ENCODE measurements at regions of chr14 and their contacts with region 1.

Region 1: DNA sequence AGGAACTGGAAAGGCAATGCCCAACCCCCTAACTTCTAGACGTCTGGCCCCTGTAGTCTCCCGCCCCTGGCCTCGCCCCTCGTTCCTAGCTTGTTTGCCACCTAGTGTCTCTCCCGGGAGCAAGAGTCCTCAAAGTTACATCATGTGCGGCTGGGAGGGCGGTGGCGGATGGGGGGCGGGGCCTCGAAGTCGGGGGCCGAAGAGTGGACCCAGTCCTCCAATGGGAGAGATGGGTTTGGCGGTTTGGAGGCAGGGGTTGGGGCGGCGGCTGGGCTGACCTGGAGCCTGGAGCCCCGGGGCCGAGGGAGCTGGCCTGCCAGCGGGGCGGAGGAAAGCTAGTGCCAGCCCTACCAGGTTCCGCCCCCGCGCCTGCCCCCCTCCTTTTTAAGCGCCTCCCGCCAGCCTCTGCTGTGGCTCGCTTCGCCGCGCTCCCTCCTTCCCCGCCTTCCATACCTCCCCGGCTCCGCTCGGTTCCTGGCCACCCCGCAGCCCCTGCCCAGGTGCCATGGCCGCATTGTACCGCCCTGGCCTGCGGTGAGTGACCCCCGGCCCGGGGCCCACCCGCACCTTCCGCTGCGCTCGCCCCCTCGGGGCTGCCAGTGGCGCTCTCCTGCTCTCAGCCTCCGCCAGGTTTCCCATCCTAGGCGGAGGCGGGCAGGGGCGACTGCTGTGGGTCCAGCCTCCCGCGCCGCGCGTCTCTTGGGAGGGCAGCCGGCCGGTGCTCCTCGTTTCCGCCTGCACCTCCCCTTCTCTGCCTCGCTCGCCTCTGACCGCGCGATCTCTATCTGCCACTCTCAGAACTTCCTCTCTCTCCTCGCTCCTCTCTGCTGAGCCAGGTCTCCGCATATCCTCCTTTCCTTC is at the start of gene PCK2:
- DNase-seq: peak; percentile 88
- ATAC-seq: peak; percentile 94
- H3K4me3 ChIP-seq: peak within 1 kb of the TSS; percentile 72
- H3K27ac ChIP-seq: peak within 1 kb of the TSS; percentile 80
- H3K4me1 ChIP-seq: peaks cover 8% of the 10 kb centered on the region
- H3K27me3 ChIP-seq: no peaks in the 10 kb centered on the region
- CTCF ChIP-seq: 0 out of 2 replicates have a peak, but pooled peaks have one; percentile 12
- POLR2A ChIP-seq: peak; percentile 89
- RAD21 ChIP-seq: no peak
- total RNA-seq, gene PCK2: 11.1 and 13.4 TPM in 2 replicates

Region 2: DNA sequence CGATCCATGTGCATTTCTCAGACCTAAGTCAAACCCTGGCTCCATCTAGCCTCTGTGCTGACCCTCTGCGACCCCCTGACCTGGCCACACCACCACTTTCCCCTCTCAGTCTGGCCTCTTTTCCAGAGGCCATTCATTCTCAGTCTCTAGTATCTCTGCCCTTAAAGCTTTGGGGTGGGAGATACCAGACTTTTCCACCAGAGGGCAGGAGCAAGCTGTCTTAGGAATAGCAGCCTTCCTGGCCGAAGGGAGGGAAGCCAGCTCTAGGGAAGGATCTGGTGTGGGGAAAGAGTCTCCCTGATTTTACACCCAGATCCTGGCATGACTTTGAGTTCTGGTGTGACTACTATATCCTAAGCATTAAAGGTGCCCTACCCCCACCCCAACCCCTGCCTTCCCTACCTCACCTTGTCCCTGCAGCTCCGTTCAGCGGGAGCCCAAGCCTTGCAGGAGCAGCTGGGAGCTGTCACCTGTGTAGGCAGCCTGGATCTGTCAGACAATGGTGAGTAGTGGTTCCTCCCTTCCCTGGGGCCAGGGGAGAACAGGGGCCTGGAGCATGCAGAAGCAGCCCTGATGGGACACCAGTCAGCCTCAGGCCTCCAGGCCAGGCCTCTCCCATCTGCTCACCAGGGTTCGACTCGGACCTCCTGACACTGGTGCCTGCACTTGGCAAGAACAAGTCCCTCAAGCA is 35.7 kb before region 1 on chr14:
- CTCF ChIA-PET with region 1: interaction called, 30 read pairs
- POLR2A ChIA-PET with region 1: no interaction called
- dilution Hi-C with region 1: no loop called
- in situ Hi-C with region 1: loop called (anchors 5 kb)
- intact Hi-C with region 1: loop called (anchors 1 kb)
- DNase-seq: peak; percentile 64
- ATAC-seq: peak; percentile 98
- H3K4me3 ChIP-seq: no peak overlapping the region
- H3K27ac ChIP-seq: no peak overlapping the region
- H3K4me1 ChIP-seq: no peaks in the 10 kb centered on the region
- H3K27me3 ChIP-seq: peaks cover 34% of the 10 kb centered on the region; the same call in 1 of the 2 replicates
- CTCF ChIP-seq: peak; percentile 93
- POLR2A ChIP-seq: no peak
- RAD21 ChIP-seq: peak; percentile 94

Region 3: DNA sequence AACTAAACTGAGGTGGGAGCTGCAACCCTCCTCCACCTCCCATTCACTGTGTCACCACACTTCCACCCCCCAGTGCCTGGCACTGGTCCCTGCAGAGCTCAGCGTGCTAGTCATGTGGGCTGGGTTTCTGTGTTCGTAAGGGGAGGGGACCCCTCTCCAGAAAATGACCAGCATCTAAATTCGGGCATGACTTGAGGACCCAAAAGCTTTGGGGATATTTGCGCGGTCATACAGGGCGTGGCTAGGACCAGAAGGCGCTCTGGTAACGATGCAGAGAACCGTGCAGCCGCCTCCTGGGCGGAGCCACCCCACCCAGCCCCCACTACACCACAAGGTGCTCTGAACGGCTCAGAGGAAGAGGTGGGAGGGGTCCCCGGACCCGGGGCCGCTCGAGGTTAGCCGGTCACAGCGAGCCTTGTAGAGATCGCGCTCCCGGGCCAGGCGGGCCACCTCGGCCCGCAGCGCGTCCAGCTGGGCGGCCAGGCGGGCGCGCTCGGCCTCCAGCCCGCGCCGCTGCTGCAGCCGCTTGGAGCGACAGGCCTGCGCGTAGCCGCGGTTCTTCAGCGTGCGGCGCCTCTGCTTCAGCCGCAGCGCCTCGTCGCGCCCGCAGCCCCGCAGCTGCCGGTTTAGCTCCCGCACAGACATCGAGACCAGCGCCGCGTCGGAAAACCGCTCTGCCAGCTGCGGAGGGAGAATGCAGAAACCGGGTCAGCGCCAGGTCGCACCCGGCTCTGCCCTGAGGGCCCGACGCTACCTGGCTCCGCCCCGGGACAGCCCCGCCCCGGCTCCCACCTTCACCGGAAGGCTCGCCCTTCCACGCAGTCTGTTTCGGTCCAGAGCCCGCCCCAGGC is 13.0 kb before region 1 on chr14:
- CTCF ChIA-PET with region 1: interaction called, 10 read pairs
- POLR2A ChIA-PET with region 1: no interaction called
- dilution Hi-C with region 1: no loop called
- in situ Hi-C with region 1: no loop called
- intact Hi-C with region 1: no loop called
- DNase-seq: no peak
- ATAC-seq: peak; percentile 91
- H3K4me3 ChIP-seq: peak overlapping the region; percentile 49
- H3K27ac ChIP-seq: no peak overlapping the region
- H3K4me1 ChIP-seq: peaks cover 2% of the 10 kb centered on the region; the same call in 1 of the 2 replicates
- H3K27me3 ChIP-seq: peaks cover 88% of the 10 kb centered on the region
- CTCF ChIP-seq: no peak
- POLR2A ChIP-seq: no peak
- RAD21 ChIP-seq: no peak

Region 4: GRCh38 chr14:24108336-24108874 is 14.3 kb after region 1 on chr14:
- CTCF ChIA-PET with region 1: interaction called, 15 read pairs
- POLR2A ChIA-PET with region 1: no interaction called
- dilution Hi-C with region 1: no loop called
- in situ Hi-C with region 1: no loop called
- intact Hi-C with region 1: no loop called
- DNase-seq: no peak
- ATAC-seq: no peak; the same call in 1 of the 2 replicates
- H3K4me3 ChIP-seq: no peak overlapping the region
- H3K27ac ChIP-seq: no peak overlapping the region
- H3K4me1 ChIP-seq: no peaks in the 10 kb centered on the region
- H3K27me3 ChIP-seq: no peaks in the 10 kb centered on the region
- CTCF ChIP-seq: no peak
- POLR2A ChIP-seq: no peak
- RAD21 ChIP-seq: no peak

Region 5: GRCh38 chr14:24188251-24189058 is 94.3 kb after region 1 on chr14 and contains the start of gene IPO4:
- CTCF ChIA-PET with region 1: no interaction called
- POLR2A ChIA-PET with region 1: no interaction called
- dilution Hi-C with region 1: no loop called
- in situ Hi-C with region 1: no loop called
- intact Hi-C with region 1: no loop called
- DNase-seq: peak; percentile 98
- ATAC-seq: peak; percentile 96
- H3K4me3 ChIP-seq: peak within 1 kb of the TSS; percentile 53
- H3K27ac ChIP-seq: peak within 1 kb of the TSS; percentile 48; the same call in 1 of the 2 replicates
- H3K4me1 ChIP-seq: peaks cover 4% of the 10 kb centered on the region
- H3K27me3 ChIP-seq: no peaks in the 10 kb centered on the region
- CTCF ChIP-seq: no peak
- POLR2A ChIP-seq: peak; percentile 90
- RAD21 ChIP-seq: peak; percentile 26; the same call in 1 of the 2 replicates
- total RNA-seq, gene IPO4: 36.7 and 37.6 TPM in 2 replicates

Region 6: DNA sequence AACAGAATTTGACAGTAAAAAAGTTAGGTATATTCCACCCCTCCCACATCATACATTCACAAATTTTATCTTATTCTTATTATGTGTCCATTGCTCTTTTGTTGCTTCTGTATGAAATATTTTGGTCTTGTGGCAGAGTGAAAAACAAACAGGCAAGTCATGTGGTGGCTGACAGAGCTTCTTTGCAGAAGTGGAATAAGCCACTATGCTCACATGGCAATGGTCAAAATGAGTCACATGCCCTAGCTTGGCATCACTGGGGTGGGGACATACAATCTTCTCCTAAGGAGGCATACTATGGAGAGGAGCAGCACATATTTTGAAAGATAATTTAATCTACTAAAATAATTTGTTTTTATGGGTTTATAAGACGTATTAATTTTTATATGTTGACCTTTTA is 441.6 kb after region 1 on chr14:
- CTCF ChIA-PET with region 1: no interaction called
- POLR2A ChIA-PET with region 1: no interaction called
- dilution Hi-C with region 1: no loop called
- in situ Hi-C with region 1: no loop called
- intact Hi-C with region 1: no loop called
- DNase-seq: no peak
- ATAC-seq: no peak
- H3K4me3 ChIP-seq: no peak overlapping the region
- H3K27ac ChIP-seq: no peak overlapping the region
- H3K4me1 ChIP-seq: no peaks in the 10 kb centered on the region
- H3K27me3 ChIP-seq: no peaks in the 10 kb centered on the region
- CTCF ChIP-seq: no peak
- POLR2A ChIP-seq: no peak
- RAD21 ChIP-seq: no peak